Spleen (tissue), 13 donors: ENCODE measurements at regions of chr17 and their contacts with region 1.

Region 1: DNA sequence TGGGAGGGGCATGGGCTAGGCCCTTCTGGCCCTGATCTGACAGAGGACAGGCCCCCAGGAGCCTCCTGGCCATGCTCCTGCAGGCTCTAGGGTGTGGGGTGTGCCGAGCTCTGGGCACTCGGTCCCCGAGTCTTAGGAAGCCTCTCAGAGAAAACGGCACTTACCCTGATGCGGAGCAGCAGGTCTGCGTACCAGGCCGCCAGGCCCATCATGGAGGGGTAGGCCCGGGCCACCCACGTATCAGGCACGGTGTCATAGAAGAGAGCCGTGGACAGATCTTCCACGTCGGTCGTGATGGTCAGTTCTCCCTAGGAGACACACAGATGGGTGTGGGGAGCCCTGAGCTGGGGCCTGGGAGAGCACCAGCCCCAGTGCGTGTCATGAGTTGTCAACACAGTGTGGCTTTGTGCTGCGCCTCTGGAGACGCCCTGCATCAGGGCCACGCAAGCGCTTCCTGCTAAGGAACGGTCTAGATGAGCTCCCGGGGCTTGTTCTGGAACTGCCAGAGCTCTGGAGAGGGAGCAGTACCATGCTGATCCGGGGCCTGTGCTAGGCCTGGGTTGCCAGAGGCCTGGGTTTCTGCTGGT is 47.9 kb downstream of the PGS1 start:
- DNase-seq: no peak
- H3K4me3 ChIP-seq: no peak overlapping the region
- H3K27ac ChIP-seq: peak overlapping the region in 1 of 8 donors; percentile 0
- H3K4me1 ChIP-seq: peaks cover 0 to 48% (median 26%) of the 10 kb centered on the region in 6 donors
- H3K27me3 ChIP-seq: no peaks in the 10 kb centered on the region
- CTCF ChIP-seq: no peak
- POLR2A ChIP-seq: no peak

Region 2: DNA sequence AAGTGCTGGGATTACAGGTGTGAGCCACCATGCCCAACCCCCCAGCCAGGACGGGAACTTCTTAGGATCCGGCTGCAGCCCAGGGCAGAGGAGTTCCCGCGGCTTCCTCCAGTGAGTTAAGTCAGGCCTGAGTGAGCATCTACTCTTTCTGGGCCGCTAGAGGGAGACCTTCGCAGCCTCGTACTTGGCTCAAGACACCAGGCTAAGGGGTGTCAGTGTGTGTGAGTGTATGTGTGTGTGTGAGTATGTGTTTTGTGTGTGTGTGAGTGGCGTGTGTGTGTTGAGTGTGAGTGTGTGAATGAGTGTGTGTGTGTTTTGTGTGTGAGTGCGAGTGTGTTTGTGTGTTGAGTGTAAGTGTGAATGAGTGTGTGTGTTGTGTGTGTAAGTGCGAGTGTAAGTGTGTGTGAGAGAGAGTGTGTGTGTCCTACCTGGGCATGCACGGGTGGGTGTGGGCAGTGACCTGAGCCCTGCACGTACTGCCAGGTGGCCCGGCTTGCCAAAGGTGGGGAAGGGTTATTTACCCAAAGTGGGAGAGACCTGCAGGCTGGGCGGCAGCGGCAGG is 136.5 kb before region 1 on chr17:
- intact Hi-C with region 1: loop called (anchors 5 kb)
- DNase-seq: peak; percentile 91
- H3K4me3 ChIP-seq: no peak overlapping the region
- H3K27ac ChIP-seq: no peak overlapping the region
- H3K4me1 ChIP-seq: peaks cover 0 to 29% (median 10%) of the 10 kb centered on the region in 6 donors
- H3K27me3 ChIP-seq: no peaks in the 10 kb centered on the region
- CTCF ChIP-seq: peak; percentile 70 to 97 (median 86)
- POLR2A ChIP-seq: no peak